Activated CD4-positive, alpha-beta memory T cell treated with anti-CD3 and anti-CD28 coated beads for 36 hours (primary cell): ENCODE measurements at regions of chr5 and their contacts with region 1.

Region 1: GRCh38 chr5:37308796-37309195 is 59.6 kb upstream of the CPLANE1 start:
- DNase-seq: no peak
- H3K4me3 Mint-ChIP-seq: no peak overlapping the region
- H3K27ac Mint-ChIP-seq: no peak overlapping the region
- H3K4me1 Mint-ChIP-seq: no peaks in the 10 kb centered on the region
- H3K27me3 Mint-ChIP-seq: no peaks in the 10 kb centered on the region

Region 2: DNA sequence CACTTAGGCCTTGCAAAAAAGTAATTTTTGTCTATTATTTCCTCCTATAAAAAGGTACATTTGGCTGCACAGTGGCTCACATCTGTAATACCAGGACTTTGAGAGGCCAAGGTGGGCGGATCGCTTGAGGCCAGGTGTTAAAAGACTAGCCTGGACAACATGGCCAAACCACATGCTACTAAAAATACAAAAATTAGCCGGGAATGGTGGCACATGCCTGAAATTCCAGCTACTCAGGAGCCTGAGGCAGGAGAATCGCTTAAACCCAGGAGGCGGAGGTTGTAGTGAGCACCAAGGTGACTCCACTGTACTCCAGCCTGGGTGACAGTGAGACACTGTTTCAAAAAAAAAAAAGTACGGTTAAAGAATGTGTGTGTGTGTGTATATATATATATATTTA is 46.4 kb after region 1 on chr5:
- CTCF ChIA-PET with region 1: no interaction called
- POLR2A ChIA-PET with region 1: no interaction called
- intact Hi-C with region 1: loop called (anchors 10 kb)
- DNase-seq: no peak
- H3K4me3 Mint-ChIP-seq: no peak overlapping the region
- H3K27ac Mint-ChIP-seq: no peak overlapping the region
- H3K4me1 Mint-ChIP-seq: no peaks in the 10 kb centered on the region
- H3K27me3 Mint-ChIP-seq: no peaks in the 10 kb centered on the region